ENCODE measurements at regions of chr2 and their contacts with region 1.

Region 1: DNA sequence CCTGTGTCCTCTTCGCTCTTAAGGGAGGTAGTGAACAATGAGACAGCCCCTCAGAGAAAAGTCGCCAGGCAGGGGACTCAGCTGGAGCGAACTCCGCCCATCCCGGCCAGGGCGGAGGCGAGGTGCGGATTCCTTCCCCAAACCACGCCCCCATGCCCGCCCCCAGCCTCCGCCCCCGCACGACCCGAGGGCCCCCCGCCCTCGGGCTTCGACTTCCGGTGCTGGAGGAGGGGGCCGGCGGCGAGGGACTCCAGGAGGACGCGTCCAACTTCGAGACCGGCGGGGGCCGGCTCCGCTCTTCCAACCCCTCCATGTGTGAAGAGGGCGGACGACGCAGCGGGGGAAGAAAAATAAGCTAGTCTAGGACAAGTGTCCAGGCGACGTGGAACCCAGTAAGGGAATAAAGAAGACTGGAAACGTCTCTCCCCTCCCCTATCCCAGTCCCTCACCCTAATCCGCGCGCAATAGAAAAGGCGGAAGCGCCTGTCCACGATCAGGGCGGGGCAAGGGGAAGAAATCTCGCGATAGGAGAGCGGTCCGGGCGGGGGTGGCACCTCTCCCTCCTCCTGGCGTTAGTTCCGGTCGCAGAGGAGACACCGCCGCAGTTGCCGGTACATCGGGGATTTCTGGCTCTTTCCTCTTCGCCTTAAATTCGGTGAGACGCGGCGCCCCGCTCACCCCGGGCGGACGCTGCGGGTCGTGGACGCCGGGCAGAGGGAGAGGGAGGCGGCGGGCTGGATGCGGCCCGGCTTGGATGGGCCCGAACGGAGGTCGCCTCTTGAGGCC is at the start of gene BZW1:
- DNase-seq: peak; percentile 97
- H3K4me3 Mint-ChIP-seq: peak within 1 kb of the TSS; percentile 96
- H3K27ac Mint-ChIP-seq: peak within 1 kb of the TSS; percentile 85
- H3K4me1 Mint-ChIP-seq: peaks cover 38% of the 10 kb centered on the region
- H3K27me3 Mint-ChIP-seq: no peaks in the 10 kb centered on the region
- CTCF ChIP-seq: no peak
- total RNA-seq, gene BZW1: 240 and 254 TPM in 2 replicates

Region 2: GRCh38 chr2:200509612-200510433 is 301.7 kb before region 1 on chr2 and contains the start of gene KCTD18:
- CTCF ChIA-PET with region 1: no interaction called
- intact Hi-C with region 1: no loop called
- DNase-seq: peak; percentile 94
- H3K4me3 Mint-ChIP-seq: peak within 1 kb of the TSS; percentile 83
- H3K27ac Mint-ChIP-seq: peak within 1 kb of the TSS; percentile 60
- H3K4me1 Mint-ChIP-seq: peaks cover 10% of the 10 kb centered on the region
- H3K27me3 Mint-ChIP-seq: no peaks in the 10 kb centered on the region
- CTCF ChIP-seq: peak; percentile 69
- total RNA-seq, gene KCTD18: 11.8 and 13.6 TPM in 2 replicates

Region 3: DNA sequence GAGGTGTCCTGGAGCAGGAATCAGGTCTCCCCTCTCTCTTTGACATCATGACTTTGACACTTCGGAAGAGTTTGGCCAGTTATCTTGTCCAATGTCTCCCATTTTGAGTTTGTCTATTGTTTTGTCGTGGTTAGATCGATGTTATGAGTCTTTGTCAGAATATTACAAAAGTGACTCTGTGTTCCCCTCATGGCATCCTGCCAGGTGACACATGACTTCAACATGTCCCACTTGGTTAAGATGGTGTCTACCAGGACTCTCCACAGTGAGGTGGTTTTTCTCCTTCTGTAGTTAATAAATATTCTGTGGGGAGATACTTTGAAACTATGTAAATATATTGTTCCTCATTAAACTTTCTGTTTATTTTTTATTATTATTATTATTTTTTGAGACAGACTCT is 76.5 kb before region 1 on chr2:
- CTCF ChIA-PET with region 1: no interaction called
- intact Hi-C with region 1: loop called (anchors 1 kb)
- DNase-seq: no peak
- H3K4me3 Mint-ChIP-seq: no peak overlapping the region
- H3K27ac Mint-ChIP-seq: no peak overlapping the region
- H3K4me1 Mint-ChIP-seq: peaks cover 11% of the 10 kb centered on the region
- H3K27me3 Mint-ChIP-seq: no peaks in the 10 kb centered on the region
- CTCF ChIP-seq: no peak

Region 4: GRCh38 chr2:200761168-200761720 is 50.3 kb before region 1 on chr2:
- CTCF ChIA-PET with region 1: no interaction called
- intact Hi-C with region 1: loop called (anchors 5 kb)
- DNase-seq: no peak
- H3K4me3 Mint-ChIP-seq: no peak overlapping the region
- H3K27ac Mint-ChIP-seq: peak overlapping the region; percentile 23
- H3K4me1 Mint-ChIP-seq: peaks cover 71% of the 10 kb centered on the region
- H3K27me3 Mint-ChIP-seq: no peaks in the 10 kb centered on the region
- CTCF ChIP-seq: no peak

Region 5: DNA sequence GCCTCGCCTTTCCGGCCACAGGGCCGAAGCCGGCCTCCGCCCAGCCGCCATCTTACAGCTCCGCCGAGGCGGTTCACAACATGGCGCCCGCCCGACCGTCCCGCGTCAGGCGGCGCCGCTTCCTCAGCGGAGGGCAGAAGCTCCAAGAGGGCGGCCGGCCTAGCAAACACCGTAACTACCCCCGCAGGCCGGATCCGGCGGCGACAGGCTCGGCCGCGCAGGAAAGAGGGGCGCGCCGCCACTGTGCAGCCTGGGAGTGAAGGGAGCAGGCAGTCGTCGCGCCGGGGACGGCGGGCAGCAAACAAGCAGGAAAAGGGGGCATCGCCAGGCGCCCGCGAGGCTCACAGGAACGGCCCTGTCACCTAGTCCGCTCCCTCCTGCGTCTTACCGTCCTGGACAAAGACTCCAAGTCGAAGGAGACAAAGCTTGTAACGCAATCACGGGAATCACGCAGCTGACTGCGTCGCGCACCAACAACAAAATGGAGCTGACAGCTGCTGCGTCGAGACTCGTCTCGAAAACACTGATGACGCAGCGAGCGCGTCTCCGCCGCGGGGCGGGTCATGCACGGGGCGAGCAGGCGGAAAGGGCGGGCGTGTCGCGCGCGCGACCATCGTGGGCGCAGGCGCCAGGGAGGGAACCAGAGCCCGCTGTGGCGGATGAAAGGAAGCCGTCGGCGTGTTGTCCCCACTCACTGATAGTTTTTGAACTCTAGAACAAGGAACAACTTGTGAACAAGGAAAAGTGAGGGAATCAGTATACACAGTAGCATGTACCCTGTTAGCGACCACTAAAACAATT is 52.8 kb after region 1 on chr2 and contains the start of gene CLK1:
- CTCF ChIA-PET with region 1: interaction called, 3 read pairs
- intact Hi-C with region 1: loop called (anchors 5 kb)
- DNase-seq: peak; percentile 90
- H3K4me3 Mint-ChIP-seq: peak within 1 kb of the TSS; percentile 86
- H3K27ac Mint-ChIP-seq: peak within 1 kb of the TSS; percentile 87
- H3K4me1 Mint-ChIP-seq: peaks cover 37% of the 10 kb centered on the region
- H3K27me3 Mint-ChIP-seq: no peaks in the 10 kb centered on the region
- CTCF ChIP-seq: no peak
- total RNA-seq, gene CLK1: 73.1 and 83.5 TPM in 2 replicates

Measured in Calu3 (cell line).